ENCODE measurements at regions of chr2 and their contacts with region 1.

Region 1: GRCh38 chr2:225668606-225669266 is 269.2 kb downstream of the NYAP2 start:
- DNase-seq: no peak
- ATAC-seq: peak; percentile 95
- H3K4me3 ChIP-seq: no peak overlapping the region
- H3K27ac ChIP-seq: peak overlapping the region; percentile 35; the same call in 1 of the 2 replicates
- H3K4me1 ChIP-seq: peaks cover 8% of the 10 kb centered on the region
- H3K27me3 ChIP-seq: no peaks in the 10 kb centered on the region
- CTCF ChIP-seq: peak; percentile 84

Region 2: DNA sequence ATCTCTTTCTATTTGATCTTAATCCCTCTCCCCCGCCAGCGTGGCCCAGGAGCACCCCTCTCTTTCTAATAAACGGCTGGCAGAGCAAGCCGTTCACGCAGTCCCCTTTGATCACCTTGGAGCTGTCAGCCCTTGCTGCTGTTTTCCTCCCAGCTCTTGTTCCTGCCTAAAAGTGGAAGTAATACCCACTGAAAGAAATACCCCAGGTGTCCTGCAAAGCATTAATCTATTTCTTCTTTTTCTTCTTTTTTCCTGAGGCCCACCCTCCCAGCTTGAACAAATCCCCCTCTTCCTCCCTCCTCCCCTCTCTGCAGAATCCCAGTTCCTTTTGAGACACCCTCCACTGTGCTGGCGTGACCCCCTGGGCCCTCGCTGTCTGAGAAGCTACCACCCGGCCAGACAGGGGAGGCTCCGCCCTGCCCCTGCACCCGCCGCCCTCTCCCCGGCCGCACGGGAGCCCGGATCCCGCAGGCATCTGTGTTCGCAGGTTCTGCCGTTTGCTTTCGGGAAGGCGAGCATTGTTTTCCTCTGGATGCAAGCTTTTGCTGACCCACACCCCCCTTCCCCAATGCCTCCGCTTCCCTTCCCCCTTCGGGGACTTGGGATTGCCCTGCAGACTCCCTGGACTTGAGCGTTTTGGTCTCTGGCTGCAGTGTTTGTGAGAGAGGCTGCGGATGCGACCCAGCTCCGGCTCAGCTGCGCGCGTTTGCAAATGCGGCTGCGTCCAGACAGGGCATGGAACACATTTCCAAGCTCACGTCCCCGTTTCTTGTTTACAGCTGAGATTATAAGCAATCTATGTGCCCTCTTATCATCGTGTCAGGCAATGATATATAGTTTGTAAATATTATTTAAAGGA is 362.3 kb after region 1 on chr2:
- CTCF ChIA-PET with region 1: no interaction called
- POLR2A ChIA-PET with region 1: no interaction called
- in situ Hi-C with region 1: no loop called
- intact Hi-C with region 1: loop called (anchors 1 kb)
- DNase-seq: peak; percentile 51
- ATAC-seq: peak; percentile 97
- H3K4me3 ChIP-seq: peak overlapping the region; percentile 51 to 66
- H3K27ac ChIP-seq: peak overlapping the region; percentile 91
- H3K4me1 ChIP-seq: peaks cover 23% of the 10 kb centered on the region
- H3K27me3 ChIP-seq: no peaks in the 10 kb centered on the region
- CTCF ChIP-seq: no peak

Region 3: DNA sequence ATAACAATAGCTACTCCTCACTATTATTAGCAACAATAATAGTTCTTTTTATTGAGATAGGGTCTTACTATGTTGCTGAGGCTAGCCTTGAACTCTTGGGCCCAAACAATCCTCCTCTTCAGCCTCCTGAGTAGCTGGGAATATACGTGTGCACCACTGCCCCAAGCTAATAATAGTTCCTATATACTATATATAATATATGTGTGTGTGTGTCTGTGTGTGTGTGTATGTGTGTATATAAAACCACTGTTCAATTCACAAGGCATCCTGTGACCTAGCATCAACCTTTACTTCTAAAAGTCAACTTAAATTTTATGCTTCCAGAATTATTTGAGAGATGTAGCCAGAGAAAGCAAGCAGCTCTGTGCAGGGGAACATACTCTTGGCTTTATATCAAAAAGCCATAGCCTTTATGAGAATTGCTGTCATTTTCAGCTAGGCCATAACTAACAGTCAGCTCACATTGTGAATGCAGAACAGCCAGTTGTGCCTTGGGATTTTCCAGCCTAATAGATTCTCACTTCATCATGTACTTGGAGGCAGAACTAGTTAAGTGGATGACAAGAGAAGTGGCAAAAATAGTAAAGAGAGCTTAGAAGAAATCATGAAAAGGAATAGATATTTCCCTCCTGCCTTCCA is 396.3 kb after region 1 on chr2:
- CTCF ChIA-PET with region 1: no interaction called
- POLR2A ChIA-PET with region 1: no interaction called
- in situ Hi-C with region 1: no loop called
- intact Hi-C with region 1: no loop called
- DNase-seq: no peak
- ATAC-seq: no peak
- H3K4me3 ChIP-seq: no peak overlapping the region
- H3K27ac ChIP-seq: no peak overlapping the region
- H3K4me1 ChIP-seq: no peaks in the 10 kb centered on the region
- H3K27me3 ChIP-seq: no peaks in the 10 kb centered on the region
- CTCF ChIP-seq: no peak

Region 4: DNA sequence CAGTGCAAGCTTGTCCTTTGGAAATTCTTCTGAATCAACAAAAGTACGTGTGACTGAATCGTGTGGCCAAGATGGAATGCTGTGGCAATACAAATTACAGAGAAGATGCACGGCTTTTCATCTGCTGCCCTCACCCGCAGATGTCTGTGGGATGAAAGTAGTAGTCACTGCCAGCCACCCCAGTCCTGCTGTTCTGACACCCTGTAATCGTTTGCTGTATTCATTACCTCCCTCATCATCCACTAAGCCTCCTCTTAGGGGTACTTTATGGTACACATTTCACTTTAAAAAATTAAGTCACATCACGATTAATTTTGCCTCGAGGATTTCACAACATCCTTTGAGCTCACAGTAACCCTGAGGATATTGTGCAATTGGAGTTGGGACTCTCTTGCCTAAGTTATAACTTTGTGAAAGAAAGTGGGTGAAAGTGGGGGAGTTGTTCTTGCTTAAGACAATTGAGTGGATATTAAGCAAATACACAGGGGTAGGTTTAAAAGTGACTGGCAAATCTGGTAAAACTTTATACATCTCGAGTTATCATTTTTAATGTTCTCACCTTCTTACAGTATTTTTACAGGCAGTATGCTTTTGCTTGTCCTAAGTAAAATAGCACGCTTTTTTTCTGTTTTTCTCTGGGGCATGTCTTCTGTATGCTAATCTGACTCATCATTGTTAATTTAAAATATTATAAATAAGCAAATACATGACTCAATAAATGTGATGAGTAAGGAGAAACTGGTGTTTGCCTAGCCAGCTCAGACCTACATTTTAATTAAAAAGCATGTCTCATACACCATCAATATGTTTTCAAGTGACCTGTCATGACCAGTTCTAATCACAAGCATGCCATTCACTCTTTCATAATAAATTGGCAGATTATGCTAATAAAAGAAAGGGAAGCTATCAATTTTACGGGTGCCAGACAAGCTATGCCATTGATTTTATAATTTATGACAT is 450.0 kb after region 1 on chr2:
- CTCF ChIA-PET with region 1: no interaction called
- POLR2A ChIA-PET with region 1: no interaction called
- in situ Hi-C with region 1: no loop called
- intact Hi-C with region 1: loop called (anchors 2 kb)
- DNase-seq: peak; percentile 82
- ATAC-seq: peak; percentile 75
- H3K4me3 ChIP-seq: peak overlapping the region in 1 of 2 experiments; percentile 30; a peak in 2 of 4 replicates
- H3K27ac ChIP-seq: peak overlapping the region; percentile 96
- H3K4me1 ChIP-seq: peaks cover 54% of the 10 kb centered on the region
- H3K27me3 ChIP-seq: no peaks in the 10 kb centered on the region
- CTCF ChIP-seq: no peak; the same call in 1 of the 2 replicates

Region 5: GRCh38 chr2:226215902-226216503 is 547.3 kb after region 1 on chr2:
- CTCF ChIA-PET with region 1: interaction called, 19 read pairs
- POLR2A ChIA-PET with region 1: no interaction called
- in situ Hi-C with region 1: no loop called
- intact Hi-C with region 1: no loop called
- DNase-seq: peak; percentile 18
- ATAC-seq: no peak; the same call in 1 of the 2 replicates
- H3K4me3 ChIP-seq: no peak overlapping the region
- H3K27ac ChIP-seq: no peak overlapping the region
- H3K4me1 ChIP-seq: no peaks in the 10 kb centered on the region
- H3K27me3 ChIP-seq: no peaks in the 10 kb centered on the region
- CTCF ChIP-seq: peak; percentile 86

Region 6: GRCh38 chr2:226799181-226799975 is 1130.6 kb after region 1 on chr2 and contains the start of gene IRS1:
- CTCF ChIA-PET with region 1: interaction called, 12 read pairs
- POLR2A ChIA-PET with region 1: no interaction called
- in situ Hi-C with region 1: no loop called
- intact Hi-C with region 1: loop called (anchors 2 kb)
- DNase-seq: no peak
- ATAC-seq: peak; percentile 37
- H3K4me3 ChIP-seq: peak within 1 kb of the TSS; percentile 73 to 79
- H3K27ac ChIP-seq: peak within 1 kb of the TSS; percentile 96
- H3K4me1 ChIP-seq: peaks cover 14% of the 10 kb centered on the region
- H3K27me3 ChIP-seq: no peaks in the 10 kb centered on the region
- CTCF ChIP-seq: peak; percentile 90
- total RNA-seq, gene IRS1: 27.3 TPM

Region 7: GRCh38 chr2:226984750-226985582 is 1316.2 kb after region 1 on chr2:
- CTCF ChIA-PET with region 1: no interaction called
- POLR2A ChIA-PET with region 1: no interaction called
- in situ Hi-C with region 1: no loop called
- intact Hi-C with region 1: loop called (anchors 2 kb)
- DNase-seq: peak; percentile 27
- ATAC-seq: peak; percentile 86
- H3K4me3 ChIP-seq: no peak overlapping the region
- H3K27ac ChIP-seq: no peak overlapping the region
- H3K4me1 ChIP-seq: no peaks in the 10 kb centered on the region
- H3K27me3 ChIP-seq: no peaks in the 10 kb centered on the region
- CTCF ChIP-seq: peak; percentile 80

Region 8: GRCh38 chr2:227106845-227107759 is 1438.4 kb after region 1 on chr2:
- CTCF ChIA-PET with region 1: interaction called, 3 read pairs
- POLR2A ChIA-PET with region 1: no interaction called
- in situ Hi-C with region 1: no loop called
- intact Hi-C with region 1: loop called (anchors 1 kb)
- DNase-seq: peak; percentile 63
- ATAC-seq: peak; percentile 98
- H3K4me3 ChIP-seq: no peak overlapping the region
- H3K27ac ChIP-seq: no peak overlapping the region
- H3K4me1 ChIP-seq: no peaks in the 10 kb centered on the region
- H3K27me3 ChIP-seq: no peaks in the 10 kb centered on the region; the same call in 1 of the 2 replicates
- CTCF ChIP-seq: peak; percentile 94